Thyroid gland (tissue), 4 donors: ENCODE measurements at regions of chr20 and their contacts with region 1.

Region 1: DNA sequence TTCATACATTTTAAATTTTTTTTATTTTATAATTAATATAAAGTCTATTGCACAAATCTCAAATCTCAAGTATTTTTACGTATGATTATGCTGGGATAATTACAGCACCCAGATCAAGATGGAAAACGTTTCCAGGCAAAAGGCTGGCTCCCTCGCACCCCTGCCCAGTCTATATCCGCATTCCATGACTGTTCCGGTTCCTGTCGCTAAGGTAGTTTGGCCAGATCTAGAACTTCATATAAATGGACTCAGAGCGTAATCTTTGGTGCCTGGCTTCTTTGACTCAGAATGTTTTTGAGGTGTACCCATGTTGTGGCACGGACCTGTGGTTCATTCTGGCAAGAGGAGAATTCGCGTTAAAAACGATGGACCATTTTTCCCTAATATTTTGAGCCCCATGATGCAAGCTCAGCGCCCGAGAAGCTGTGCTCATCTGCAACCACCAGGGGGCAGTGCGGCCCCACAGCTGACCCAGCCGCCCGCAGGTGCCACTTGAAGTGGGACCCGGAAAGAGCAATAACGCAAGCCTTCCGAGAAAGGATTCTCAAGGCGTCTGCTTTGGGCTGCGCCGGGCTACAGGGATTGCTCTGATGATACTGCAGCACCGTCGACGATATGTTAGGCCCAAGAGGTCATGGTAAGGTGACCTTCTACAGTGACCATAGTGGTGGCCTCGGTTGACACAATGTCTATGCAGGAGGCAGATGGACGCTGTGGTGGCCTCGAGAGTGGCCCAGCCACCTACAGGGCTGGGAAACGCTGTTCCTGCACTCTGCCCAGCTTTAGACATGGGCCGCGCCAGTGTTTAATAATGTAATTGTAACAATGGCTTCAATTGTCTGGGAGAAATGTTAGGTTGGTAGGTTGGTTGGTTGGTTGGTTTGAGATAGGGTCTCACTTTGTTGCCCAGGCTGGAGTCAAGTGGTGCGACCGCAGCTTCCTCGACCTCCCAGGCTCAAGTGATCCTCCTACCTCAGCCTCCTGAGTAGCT is 160.1 kb downstream of the ZMYND8 start:
- DNase-seq: peak; percentile 72 to 82
- H3K4me3 ChIP-seq: no peak overlapping the region
- H3K27ac ChIP-seq: no peak overlapping the region
- H3K4me1 ChIP-seq: peaks cover 0 to 7% of the 10 kb centered on the region in 2 donors
- H3K27me3 ChIP-seq: no peaks in the 10 kb centered on the region
- CTCF ChIP-seq: peak; percentile 93 to 98 (median 95)
- POLR2A ChIP-seq: no peak

Region 2: DNA sequence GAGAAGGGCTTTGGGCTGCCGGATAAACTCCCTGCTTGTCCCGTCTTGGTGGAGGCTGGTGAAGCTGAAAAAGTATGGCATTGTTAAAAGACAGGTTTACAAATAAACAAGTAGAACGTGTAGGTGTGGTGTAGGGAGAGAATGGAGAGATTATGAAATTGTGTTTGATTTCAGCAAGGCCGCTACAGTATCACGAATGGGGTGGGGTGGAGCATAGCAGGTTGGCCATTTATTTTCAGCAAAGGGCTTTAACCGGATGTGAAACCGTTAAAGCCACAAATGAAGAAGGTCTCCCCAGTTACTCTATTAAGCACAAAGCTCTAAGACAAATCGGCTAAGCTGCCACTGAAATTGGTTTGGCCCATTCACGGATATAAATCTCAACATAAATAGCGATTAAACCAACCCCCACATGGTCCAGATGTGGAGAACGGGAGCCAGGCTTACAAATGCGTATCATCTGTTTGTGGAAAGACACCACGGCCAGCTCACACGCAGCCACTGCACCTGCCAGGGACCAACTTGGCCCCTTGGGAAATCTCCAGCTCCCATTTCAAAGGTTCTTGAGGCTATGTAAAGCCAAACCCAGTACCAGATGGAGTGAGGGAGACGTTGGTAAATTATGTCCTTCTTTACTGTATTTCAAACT is 66.1 kb after region 1 on chr20:
- intact Hi-C with region 1: loop called (anchors 10 kb)
- DNase-seq: no peak
- H3K4me3 ChIP-seq: no peak overlapping the region
- H3K27ac ChIP-seq: no peak overlapping the region
- H3K4me1 ChIP-seq: peaks cover 17 to 24% of the 10 kb centered on the region in 2 donors
- H3K27me3 ChIP-seq: no peaks in the 10 kb centered on the region
- CTCF ChIP-seq: no peak
- POLR2A ChIP-seq: no peak

Region 3: GRCh38 chr20:47620808-47621805 is 424.7 kb after region 1 on chr20:
- intact Hi-C with region 1: loop called (anchors 5 kb)
- DNase-seq: no peak
- H3K4me3 ChIP-seq: no peak overlapping the region
- H3K27ac ChIP-seq: no peak overlapping the region
- H3K4me1 ChIP-seq: no peaks in the 10 kb centered on the region
- H3K27me3 ChIP-seq: no peaks in the 10 kb centered on the region
- CTCF ChIP-seq: peak; percentile 51 to 94 (median 78)
- POLR2A ChIP-seq: no peak